Activated CD4-positive, alpha-beta memory T cell treated with anti-CD3 and anti-CD28 coated beads for 36 hours (primary cell): ENCODE measurements at regions of chr2 and their contacts with region 1.

Region 1: GRCh38 chr2:85561317-85561979 is at the start of gene GGCX:
- DNase-seq: peak; percentile 98
- H3K4me3 Mint-ChIP-seq: peak within 1 kb of the TSS; percentile 92
- H3K27ac Mint-ChIP-seq: peak within 1 kb of the TSS; percentile 83
- H3K4me1 Mint-ChIP-seq: peaks cover 37% of the 10 kb centered on the region
- H3K27me3 Mint-ChIP-seq: no peaks in the 10 kb centered on the region
- total RNA-seq, gene GGCX: 24.2 to 25.2 TPM

Region 2: DNA sequence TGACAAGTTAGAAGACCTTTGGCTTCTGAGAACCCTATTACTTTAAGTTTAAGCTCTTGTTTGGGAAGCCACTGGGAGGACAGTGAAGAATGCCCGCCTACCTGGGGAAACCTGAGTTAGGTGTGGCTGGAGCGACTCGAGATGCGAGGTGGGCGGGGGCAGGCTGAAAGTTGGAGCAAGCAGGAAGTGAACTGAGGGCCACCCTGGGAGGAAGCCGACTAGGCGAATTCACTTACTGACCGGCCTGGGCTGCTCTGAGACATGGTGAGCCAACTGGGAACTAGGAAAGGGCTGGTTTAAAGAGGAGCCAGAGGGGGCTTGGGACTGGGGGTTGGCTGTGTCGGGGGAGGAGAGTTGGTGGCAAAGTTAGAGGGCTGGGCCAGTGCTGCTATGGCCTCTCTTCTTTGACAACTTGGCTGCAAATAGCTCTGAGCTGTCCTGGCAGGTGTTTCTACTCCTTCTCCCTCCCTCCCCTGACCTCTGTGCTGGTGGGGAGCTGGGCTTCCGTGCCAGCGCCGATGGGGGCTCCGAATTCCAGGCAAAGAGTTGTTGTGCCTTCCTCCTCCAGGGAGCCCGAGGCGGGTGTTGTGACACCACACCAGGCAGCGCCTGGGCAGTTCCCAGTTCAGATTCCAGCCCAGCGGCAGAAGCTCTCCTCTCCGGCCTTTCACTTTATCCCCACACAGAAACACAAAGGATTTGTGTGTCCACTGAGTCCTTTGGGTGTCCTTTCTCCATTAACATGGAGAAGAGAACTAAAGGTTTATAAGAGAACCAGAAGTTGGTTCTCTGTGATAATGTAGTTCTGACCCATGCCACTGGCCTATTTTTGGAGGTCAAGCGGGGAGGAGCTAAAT is 16.2 kb after region 1 on chr2 and contains the start of gene VAMP8:
- CTCF ChIA-PET with region 1: no interaction called
- POLR2A ChIA-PET with region 1: interaction called, 5 read pairs
- intact Hi-C with region 1: loop called (anchors 1 kb)
- DNase-seq: peak; percentile 83
- H3K4me3 Mint-ChIP-seq: peak within 1 kb of the TSS; percentile 95
- H3K27ac Mint-ChIP-seq: peak within 1 kb of the TSS; percentile 87
- H3K4me1 Mint-ChIP-seq: peaks cover 28% of the 10 kb centered on the region
- H3K27me3 Mint-ChIP-seq: no peaks in the 10 kb centered on the region
- total RNA-seq, gene VAMP8: 112 to 114 TPM

Region 3: GRCh38 chr2:85611705-85612587 is 50.5 kb after region 1 on chr2 and contains the start of gene C2orf68:
- CTCF ChIA-PET with region 1: no interaction called
- POLR2A ChIA-PET with region 1: interaction called, 4 read pairs
- intact Hi-C with region 1: loop called (anchors 1 kb)
- DNase-seq: peak; percentile 94
- H3K4me3 Mint-ChIP-seq: peak within 1 kb of the TSS; percentile 95
- H3K27ac Mint-ChIP-seq: peak within 1 kb of the TSS; percentile 91
- H3K4me1 Mint-ChIP-seq: peaks cover 29% of the 10 kb centered on the region
- H3K27me3 Mint-ChIP-seq: no peaks in the 10 kb centered on the region
- total RNA-seq, gene C2orf68: 36.3 to 39.1 TPM